Mammary epithelial cell (primary cell): ENCODE measurements at regions of chr1 and their contacts with region 1.

Region 1: GRCh38 chr1:115642168-115643072 is 650 bp downstream of the VANGL1 start:
- DNase-seq: peak; percentile 70
- H3K4me3 ChIP-seq: peak overlapping the region; percentile 61 to 88 (median 67)
- H3K27ac ChIP-seq: peak overlapping the region; percentile 50
- H3K4me1 ChIP-seq: peaks cover 14% of the 10 kb centered on the region
- H3K27me3 ChIP-seq: no peaks in the 10 kb centered on the region
- CTCF ChIP-seq: peak; percentile 8 to 35

Region 2: GRCh38 chr1:115577513-115577912 is 64.9 kb before region 1 on chr1:
- CTCF ChIA-PET with region 1: no interaction called
- dilution Hi-C with region 1: no loop called
- in situ Hi-C with region 1: no loop called
- intact Hi-C with region 1: no loop called
- DNase-seq: no peak
- H3K4me3 ChIP-seq: no peak overlapping the region
- H3K27ac ChIP-seq: no peak overlapping the region
- H3K4me1 ChIP-seq: no peaks in the 10 kb centered on the region
- H3K27me3 ChIP-seq: no peaks in the 10 kb centered on the region
- CTCF ChIP-seq: no peak

Region 3: DNA sequence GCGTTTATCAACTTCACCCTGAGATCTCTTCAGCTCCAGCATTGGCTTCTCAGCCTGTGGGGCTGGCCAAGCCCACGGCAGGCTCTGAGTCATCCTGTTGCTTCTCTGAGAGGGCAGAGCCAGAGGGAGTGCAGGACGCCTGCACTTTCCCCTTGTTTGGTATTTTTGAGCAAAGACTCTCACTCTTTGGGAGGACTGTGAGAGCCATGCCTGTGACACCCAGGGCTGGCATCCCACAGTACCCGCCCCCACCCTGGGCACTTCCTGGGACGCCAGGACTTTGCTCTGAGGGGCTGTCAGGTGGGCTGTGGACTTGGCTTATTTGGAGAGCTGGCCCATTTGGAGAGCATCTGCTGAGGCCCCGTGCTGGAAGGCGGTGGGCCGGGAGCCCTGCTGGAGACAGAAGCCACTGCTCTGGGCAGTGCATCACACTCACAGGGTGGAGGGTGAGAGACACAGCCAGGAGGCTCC is 36.8 kb after region 1 on chr1:
- CTCF ChIA-PET with region 1: no interaction called
- dilution Hi-C with region 1: no loop called
- in situ Hi-C with region 1: no loop called
- intact Hi-C with region 1: loop called (anchors 5 kb)
- DNase-seq: peak; percentile 64
- H3K4me3 ChIP-seq: no peak overlapping the region
- H3K27ac ChIP-seq: no peak overlapping the region
- H3K4me1 ChIP-seq: peaks cover 38% of the 10 kb centered on the region
- H3K27me3 ChIP-seq: no peaks in the 10 kb centered on the region
- CTCF ChIP-seq: no peak

Region 4: DNA sequence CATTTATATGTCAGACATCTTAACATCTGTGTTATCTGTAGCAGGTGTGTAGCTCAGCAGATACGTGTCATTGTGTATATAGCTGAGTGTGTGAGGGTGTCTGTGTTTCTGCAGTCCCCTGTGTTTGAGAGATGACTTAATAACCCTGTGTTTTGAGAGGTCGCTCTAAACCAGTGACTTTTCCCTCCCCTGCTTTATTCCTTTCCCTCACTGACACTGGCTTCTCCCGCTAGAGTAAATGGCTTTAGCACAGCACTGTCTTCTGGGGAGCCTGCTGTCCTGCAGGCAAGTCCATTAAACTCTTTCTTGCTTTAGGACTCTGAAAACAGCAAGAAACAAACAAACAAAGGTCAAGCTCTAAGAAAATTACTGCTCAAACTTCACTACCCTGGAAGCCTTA is 52.4 kb after region 1 on chr1:
- CTCF ChIA-PET with region 1: no interaction called
- dilution Hi-C with region 1: loop called (anchors 5 kb)
- in situ Hi-C with region 1: no loop called
- intact Hi-C with region 1: no loop called
- DNase-seq: no peak
- H3K4me3 ChIP-seq: no peak overlapping the region
- H3K27ac ChIP-seq: no peak overlapping the region
- H3K4me1 ChIP-seq: no peaks in the 10 kb centered on the region
- H3K27me3 ChIP-seq: no peaks in the 10 kb centered on the region
- CTCF ChIP-seq: no peak

Region 5: DNA sequence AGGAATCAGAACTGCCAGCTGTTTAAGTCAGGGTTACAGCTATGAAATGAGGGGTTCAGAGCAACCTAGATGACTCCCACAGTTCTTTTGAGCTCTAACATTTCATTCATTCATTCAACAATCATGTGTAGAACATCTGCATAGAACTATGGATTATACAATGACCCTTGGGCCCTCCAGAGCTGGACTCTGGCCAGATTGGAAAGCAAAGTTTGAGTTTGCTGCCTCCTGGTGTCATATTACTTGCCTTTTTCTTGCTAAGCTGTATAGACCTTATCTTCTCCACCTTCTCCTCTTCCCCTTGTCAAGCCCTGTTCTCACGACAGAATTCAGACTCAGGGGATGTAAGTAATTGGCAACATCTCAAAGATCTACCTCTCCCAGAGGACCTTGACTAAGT is 122.1 kb after region 1 on chr1:
- CTCF ChIA-PET with region 1: no interaction called
- dilution Hi-C with region 1: no loop called
- in situ Hi-C with region 1: no loop called
- intact Hi-C with region 1: loop called (anchors 1 kb)
- DNase-seq: peak; percentile 42
- H3K4me3 ChIP-seq: no peak overlapping the region
- H3K27ac ChIP-seq: no peak overlapping the region
- H3K4me1 ChIP-seq: no peaks in the 10 kb centered on the region
- H3K27me3 ChIP-seq: no peaks in the 10 kb centered on the region
- CTCF ChIP-seq: peak; percentile 67 to 69

Region 6: GRCh38 chr1:116151739-116152576 is 509.5 kb after region 1 on chr1:
- CTCF ChIA-PET with region 1: no interaction called
- dilution Hi-C with region 1: no loop called
- in situ Hi-C with region 1: no loop called
- intact Hi-C with region 1: no loop called
- DNase-seq: peak; percentile 73
- H3K4me3 ChIP-seq: peak overlapping the region; percentile 34 to 49 (median 36)
- H3K27ac ChIP-seq: no peak overlapping the region
- H3K4me1 ChIP-seq: peaks cover 4% of the 10 kb centered on the region
- H3K27me3 ChIP-seq: no peaks in the 10 kb centered on the region
- CTCF ChIP-seq: peak; percentile 65 to 93